Right ventricle myocardium inferior (tissue), 1 donor: ENCODE measurements at regions of chr20 and their contacts with region 1.

Region 1: GRCh38 chr20:10673988-10674711 is at the start of gene JAG1:
- DNase-seq: peak; percentile 99
- ATAC-seq: peak; percentile 88
- total RNA-seq, gene JAG1: 24.4 TPM

Region 2: GRCh38 chr20:10540636-10541493 is 133.3 kb before region 1 on chr20:
- intact Hi-C with region 1: no loop called
- DNase-seq: no peak
- ATAC-seq: no peak

Region 3: DNA sequence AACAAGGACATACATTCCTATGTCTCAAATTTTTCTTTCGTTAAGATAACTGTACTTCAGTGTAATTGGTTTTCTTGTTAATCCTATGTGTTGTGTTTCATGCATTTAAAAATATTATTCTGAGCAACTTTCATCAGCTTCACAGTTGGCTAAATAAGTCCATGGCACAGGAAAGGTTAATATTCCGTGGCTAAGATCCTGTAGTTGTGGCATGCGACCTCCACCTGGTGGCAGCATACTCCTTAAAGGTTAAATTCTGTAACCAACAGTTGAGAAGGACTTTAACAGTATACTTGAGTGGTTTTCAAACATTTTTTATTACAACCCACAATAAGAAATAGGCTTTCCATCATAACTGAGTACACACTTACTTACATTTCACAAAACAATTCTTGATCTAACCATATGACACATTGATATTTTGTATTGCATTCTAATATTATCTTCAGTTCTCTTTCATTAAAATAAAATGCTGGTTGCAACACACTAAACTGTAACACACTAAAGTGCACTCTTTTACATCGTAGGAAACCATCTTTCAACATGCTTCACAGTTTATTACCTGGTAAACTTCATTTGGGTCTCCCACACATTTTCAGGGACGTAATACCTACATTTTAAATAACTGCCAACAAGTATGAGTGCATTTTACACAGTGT is 120.7 kb before region 1 on chr20:
- intact Hi-C with region 1: loop called (anchors 5 kb)
- DNase-seq: no peak
- ATAC-seq: peak; percentile 70

Region 4: GRCh38 chr20:10864076-10864918 is 190.1 kb after region 1 on chr20:
- intact Hi-C with region 1: loop called (anchors 5 kb)
- DNase-seq: no peak
- ATAC-seq: peak; percentile 92

Region 5: DNA sequence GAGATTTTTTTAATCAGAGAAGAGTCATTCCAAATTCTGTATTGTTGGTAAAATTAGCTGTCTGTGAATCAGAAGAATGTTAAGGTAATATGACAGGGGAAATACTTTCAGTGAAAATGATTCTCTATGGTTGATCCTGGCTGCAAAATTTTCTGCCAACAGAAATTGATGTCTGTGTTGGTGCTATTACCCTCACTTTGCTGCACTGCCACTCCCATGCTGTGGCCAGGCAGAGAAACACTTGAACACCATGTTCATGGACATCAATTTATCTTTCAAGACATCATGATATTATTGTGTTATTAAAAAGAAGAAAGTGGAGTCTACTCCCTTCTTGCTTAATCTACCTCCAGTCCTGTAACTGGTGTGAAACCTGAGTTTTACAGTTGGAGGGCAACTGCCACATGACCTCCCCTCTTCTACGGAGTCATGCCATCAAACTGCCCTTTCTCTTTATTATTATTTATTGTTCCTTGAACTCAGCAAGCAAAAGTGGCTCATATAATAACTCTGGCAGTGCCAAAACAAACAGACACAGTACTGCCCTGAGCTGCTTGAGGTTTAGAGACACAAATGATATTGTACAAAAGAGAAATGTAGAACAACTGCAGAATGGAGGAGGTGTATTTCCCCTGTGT is 287.6 kb after region 1 on chr20:
- intact Hi-C with region 1: loop called (anchors 5 kb)
- DNase-seq: no peak
- ATAC-seq: no peak

Region 6: GRCh38 chr20:11274141-11274594 is 600.0 kb after region 1 on chr20:
- intact Hi-C with region 1: loop called (anchors 2 kb)
- DNase-seq: no peak
- ATAC-seq: peak; percentile 78